Left cardiac atrium (tissue), 4 donors: ENCODE measurements at regions of chr2 and their contacts with region 1.

Region 1: GRCh38 chr2:64523666-64524603 is at the start of gene AFTPH:
- DNase-seq: peak; percentile 99
- ATAC-seq: peak; percentile 100
- total RNA-seq, gene AFTPH: 12.1 to 12.8 TPM

Region 2: DNA sequence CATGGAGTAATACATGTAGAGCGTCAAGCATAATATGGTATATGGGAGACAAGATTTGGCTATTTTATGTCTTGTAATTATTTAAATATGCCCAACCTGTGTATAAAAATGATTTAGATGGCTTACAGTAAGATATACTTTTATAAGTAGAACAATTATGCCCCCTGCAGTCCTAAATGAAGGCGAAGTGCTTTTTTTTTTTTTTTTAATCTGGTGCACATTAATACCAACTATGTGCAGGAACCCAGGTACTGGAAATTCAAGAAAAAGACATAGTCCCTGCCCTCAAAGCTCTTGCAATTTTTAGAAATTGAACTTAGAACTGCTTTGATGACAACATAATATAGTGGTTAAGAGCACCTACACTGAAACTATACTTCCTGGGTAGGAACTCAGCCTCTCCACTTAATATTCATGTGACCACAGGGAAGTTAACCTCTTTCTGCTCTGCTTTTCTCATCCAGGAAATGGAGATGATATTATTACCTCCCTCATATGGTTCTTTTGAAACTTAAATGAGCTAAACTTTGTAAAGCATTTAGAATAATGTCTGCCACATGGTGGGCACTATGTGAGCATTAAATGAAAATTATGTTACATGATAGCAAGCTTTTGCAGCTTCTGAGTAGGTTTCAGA is 38.3 kb after region 1 on chr2:
- intact Hi-C with region 1: loop called in 1 of 2 experiments (anchors 2 kb)
- DNase-seq: no peak
- ATAC-seq: no peak

Region 3: DNA sequence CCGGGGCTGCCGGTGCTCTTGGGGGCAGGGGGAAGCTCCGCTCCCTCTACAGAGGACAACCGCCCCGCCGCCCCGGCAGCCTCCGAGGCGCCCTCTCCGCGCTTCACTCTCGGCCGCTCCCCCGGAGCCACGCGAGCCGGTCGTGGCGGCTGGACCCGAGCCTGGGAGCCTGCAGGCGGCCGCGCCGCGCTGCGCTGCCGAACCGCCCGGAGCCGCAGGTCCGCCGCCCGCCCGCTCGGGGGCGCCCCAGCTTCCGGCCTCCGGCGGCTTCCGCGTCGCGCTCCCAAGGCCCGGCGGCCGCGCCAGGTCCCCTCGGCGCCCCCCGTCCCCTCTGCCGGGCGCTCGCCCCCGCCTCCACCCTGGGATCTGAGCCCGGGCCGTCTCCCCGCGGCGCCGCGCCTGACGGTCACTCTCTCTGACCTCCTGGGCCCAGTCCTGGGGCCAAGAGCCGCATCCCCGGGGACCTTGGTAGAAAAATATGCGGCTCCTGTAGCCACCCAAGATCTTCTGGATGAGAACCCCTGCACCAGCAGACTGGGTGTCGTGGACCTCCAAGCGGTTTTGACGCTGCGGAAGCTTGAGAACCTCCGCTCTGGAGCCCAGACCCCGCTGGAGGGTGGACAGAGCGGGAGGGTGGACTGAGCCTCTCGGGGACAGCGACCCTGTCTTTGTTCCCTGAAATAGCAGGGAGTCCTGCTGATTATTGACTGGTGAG is 85.4 kb after region 1 on chr2:
- intact Hi-C with region 1: no loop called
- DNase-seq: peak; percentile 68
- ATAC-seq: peak; percentile 73 to 86

Region 4: GRCh38 chr2:64644177-64645004 is 120.5 kb after region 1 on chr2:
- intact Hi-C with region 1: no loop called
- DNase-seq: peak; percentile 89
- ATAC-seq: peak; percentile 92 to 93

Region 5: DNA sequence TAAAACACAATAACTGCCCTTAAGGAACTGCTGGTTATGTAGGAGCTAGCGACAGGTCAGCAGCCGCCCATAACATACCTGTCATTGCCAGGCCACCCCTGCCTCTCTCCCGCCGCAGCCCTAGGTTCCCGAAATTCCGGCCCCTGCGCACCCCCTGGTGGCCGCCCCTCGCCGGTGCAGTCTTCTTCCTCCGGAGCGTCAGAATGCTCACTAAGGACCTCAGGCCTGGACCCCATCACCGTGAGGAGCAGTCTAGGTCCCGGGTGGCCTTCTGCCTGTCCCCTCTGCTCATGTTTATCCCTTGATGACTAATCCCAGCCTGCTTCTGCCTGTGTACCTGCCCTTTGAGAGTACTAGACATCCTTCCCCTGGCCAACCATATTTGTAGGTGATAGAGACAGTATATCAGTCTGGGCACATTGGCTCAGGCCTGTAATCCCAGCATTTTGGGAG is 349.6 kb after region 1 on chr2:
- intact Hi-C with region 1: loop called in 1 of 2 experiments (anchors 10 kb)
- DNase-seq: peak; percentile 76
- ATAC-seq: peak; percentile 79 to 85